ENCODE measurements at regions of chr18 and their contacts with region 1.

Region 1: DNA sequence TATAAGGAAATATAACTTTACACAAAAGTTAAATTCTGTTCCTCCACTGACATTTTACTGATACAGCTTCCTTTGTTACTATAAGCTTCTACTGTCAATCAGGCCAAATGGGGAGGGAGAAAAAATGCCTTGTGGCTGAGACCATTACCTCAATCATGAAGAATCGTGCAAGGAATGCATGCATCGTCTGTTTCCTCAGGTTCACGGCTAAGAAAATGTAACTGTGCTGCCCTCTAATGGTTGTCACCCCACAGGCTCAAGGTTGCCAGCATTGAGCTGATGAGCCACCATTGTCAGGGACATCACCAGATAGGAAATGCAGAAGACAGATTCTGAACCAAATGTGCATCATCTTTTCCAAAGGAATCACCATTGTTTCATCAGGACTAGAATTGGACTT is 426.9 kb downstream of the CDH2 start:
- DNase-seq: no peak
- ATAC-seq: peak in 2 of 4 donors; percentile 67 to 74
- H3K4me3 ChIP-seq: no peak overlapping the region
- H3K27ac ChIP-seq: no peak overlapping the region
- H3K4me1 ChIP-seq: no peaks in the 10 kb centered on the region
- H3K27me3 ChIP-seq: no peaks in the 10 kb centered on the region
- CTCF ChIP-seq: peak; percentile 57

Region 2: GRCh38 chr18:27017901-27018500 is 732.0 kb before region 1 on chr18:
- intact Hi-C with region 1: loop called in 1 of 2 experiments (anchors 5 kb)
- DNase-seq: no peak
- ATAC-seq: peak in 2 of 4 donors; percentile 39 to 70
- H3K4me3 ChIP-seq: no peak overlapping the region
- H3K27ac ChIP-seq: no peak overlapping the region
- H3K4me1 ChIP-seq: no peaks in the 10 kb centered on the region
- H3K27me3 ChIP-seq: no peaks in the 10 kb centered on the region
- CTCF ChIP-seq: peak; percentile 59

Region 3: GRCh38 chr18:27363872-27364271 is 386.1 kb before region 1 on chr18:
- intact Hi-C with region 1: loop called (anchors 5 to 10 kb)
- DNase-seq: no peak
- ATAC-seq: peak in 2 of 4 donors; percentile 58 to 66
- H3K4me3 ChIP-seq: no peak overlapping the region
- H3K27ac ChIP-seq: no peak overlapping the region
- H3K4me1 ChIP-seq: no peaks in the 10 kb centered on the region
- H3K27me3 ChIP-seq: no peaks in the 10 kb centered on the region
- CTCF ChIP-seq: peak; percentile 55

Region 4: DNA sequence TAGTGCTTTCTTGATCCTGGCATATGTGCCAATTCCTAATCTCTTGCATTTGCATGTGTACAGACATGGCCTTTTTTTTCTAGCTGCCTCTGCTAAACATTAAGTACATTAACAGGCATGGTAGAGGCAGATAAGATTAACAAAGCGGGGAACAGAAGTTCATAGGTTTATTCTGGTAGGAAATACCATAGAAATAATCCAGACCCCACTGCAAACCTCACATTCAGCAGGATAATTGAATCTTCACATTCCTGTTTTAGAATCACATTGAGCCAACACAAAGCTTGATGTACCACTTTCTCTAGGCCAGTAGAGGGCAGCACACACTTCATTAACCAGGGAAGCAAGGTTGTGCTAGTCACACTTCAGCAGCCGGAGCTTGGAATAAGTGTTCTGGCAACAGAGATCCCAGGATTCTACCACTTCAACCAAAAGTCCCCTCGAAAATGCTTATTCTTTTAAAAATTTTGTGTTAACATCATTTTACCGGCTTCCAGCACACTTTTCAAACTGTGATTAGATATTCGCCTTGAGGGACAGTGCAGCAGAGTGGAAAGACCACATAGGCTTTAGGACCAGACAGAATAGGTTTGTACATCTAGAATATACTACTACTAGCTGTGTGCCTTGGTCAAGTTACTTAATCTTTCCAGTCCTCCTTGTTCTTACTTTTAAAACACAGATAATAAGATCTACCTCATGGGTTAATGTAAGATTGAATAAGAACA is 144.7 kb before region 1 on chr18:
- intact Hi-C with region 1: loop called (anchors 5 to 10 kb)
- DNase-seq: no peak
- ATAC-seq: peak; percentile 71 to 89 (median 80)
- H3K4me3 ChIP-seq: no peak overlapping the region
- H3K27ac ChIP-seq: no peak overlapping the region
- H3K4me1 ChIP-seq: peaks cover 5% of the 10 kb centered on the region
- H3K27me3 ChIP-seq: no peaks in the 10 kb centered on the region
- CTCF ChIP-seq: peak; percentile 74